Natural killer cell (primary cell): ENCODE measurements at regions of chr4 and their contacts with region 1.

Region 1: GRCh38 chr4:102344954-102345794 is at the start of gene SLC39A8:
- DNase-seq: peak; percentile 82 to 94
- ATAC-seq: peak; percentile 80 to 92 (median 83)
- H3K4me3 ChIP-seq: peak within 1 kb of the TSS; percentile 83
- H3K4me3 Mint-ChIP-seq: peak within 1 kb of the TSS; percentile 86
- H3K27ac ChIP-seq: peak within 1 kb of the TSS; percentile 92
- H3K27ac Mint-ChIP-seq: peak within 1 kb of the TSS; percentile 83 to 92
- H3K4me1 ChIP-seq: peaks cover 7% of the 10 kb centered on the region
- H3K4me1 Mint-ChIP-seq: peaks cover 37 to 41% of the 10 kb centered on the region in 2 donors
- H3K27me3 ChIP-seq: no peaks in the 10 kb centered on the region
- H3K27me3 Mint-ChIP-seq: peaks cover 0 to 6% of the 10 kb centered on the region in 2 donors
- CTCF ChIP-seq: peak; percentile 86
- total RNA-seq, gene SLC39A8: 18.0 to 20.0 (median 18.2) TPM

Region 2: GRCh38 chr4:102390438-102390837 is 45.3 kb after region 1 on chr4:
- intact Hi-C with region 1: loop called (anchors 1 kb)
- DNase-seq: peak in 1 of 2 donors; percentile 6
- ATAC-seq: peak; percentile 87 to 91 (median 89)
- H3K4me3 ChIP-seq: no peak overlapping the region
- H3K4me3 Mint-ChIP-seq: no peak overlapping the region
- H3K27ac ChIP-seq: no peak overlapping the region
- H3K27ac Mint-ChIP-seq: peak overlapping the region in 1 of 2 donors; percentile 4
- H3K4me1 ChIP-seq: no peaks in the 10 kb centered on the region
- H3K4me1 Mint-ChIP-seq: peaks cover 12 to 14% of the 10 kb centered on the region in 2 donors
- H3K27me3 ChIP-seq: peaks cover 2% of the 10 kb centered on the region
- H3K27me3 Mint-ChIP-seq: peaks cover 0 to 9% of the 10 kb centered on the region in 2 donors
- CTCF ChIP-seq: no peak

Region 3: GRCh38 chr4:102430461-102430910 is 85.3 kb after region 1 on chr4:
- intact Hi-C with region 1: loop called (anchors 1 kb)
- DNase-seq: peak in 1 of 2 donors; percentile 20
- ATAC-seq: no peak
- H3K4me3 ChIP-seq: peak overlapping the region; percentile 52
- H3K4me3 Mint-ChIP-seq: peak overlapping the region; percentile 88
- H3K27ac ChIP-seq: peak overlapping the region; percentile 38
- H3K27ac Mint-ChIP-seq: peak overlapping the region; percentile 80 to 81
- H3K4me1 ChIP-seq: no peaks in the 10 kb centered on the region
- H3K4me1 Mint-ChIP-seq: peaks cover 0 to 6% of the 10 kb centered on the region in 2 donors
- H3K27me3 ChIP-seq: no peaks in the 10 kb centered on the region
- H3K27me3 Mint-ChIP-seq: no peaks in the 10 kb centered on the region
- CTCF ChIP-seq: no peak

Region 4: DNA sequence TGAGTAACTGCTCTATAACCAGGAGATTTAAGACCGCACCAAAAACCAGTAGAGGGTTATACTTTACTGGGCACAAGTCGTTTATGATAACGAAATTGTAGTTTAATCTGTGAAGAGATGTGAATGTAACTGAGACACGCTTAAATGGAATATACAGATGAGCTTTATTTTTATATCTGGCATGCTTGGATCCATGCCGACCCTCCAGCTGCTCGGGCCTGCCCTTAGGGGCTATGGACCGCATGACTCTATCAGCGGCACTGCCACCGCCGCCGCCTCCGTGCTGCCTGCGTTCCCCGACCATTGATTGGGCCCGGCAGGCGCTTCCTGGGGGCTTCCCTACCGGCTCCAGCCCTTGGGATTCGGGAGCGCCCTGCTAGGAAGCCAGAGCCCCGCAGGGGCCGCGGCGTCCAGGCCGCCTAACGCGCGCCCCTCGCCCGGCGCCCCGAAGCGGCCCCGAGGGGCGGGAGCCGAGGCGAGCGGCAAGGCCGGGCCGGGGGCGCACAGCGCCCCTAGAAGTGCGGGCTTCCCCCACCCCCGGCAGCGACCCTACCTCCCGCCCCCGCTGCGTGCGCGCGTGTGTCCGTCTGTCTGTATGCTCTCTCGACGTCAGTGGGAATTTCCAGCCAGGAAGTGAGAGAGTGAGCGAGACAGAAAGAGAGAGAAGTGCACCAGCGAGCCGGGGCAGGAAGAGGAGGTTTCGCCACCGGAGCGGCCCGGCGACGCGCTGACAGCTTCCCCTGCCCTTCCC is 155.7 kb after region 1 on chr4 and contains the start of gene NFKB1:
- intact Hi-C with region 1: loop called (anchors 5 kb)
- DNase-seq: peak; percentile 84 to 96
- ATAC-seq: peak; percentile 71 to 86 (median 78)
- H3K4me3 ChIP-seq: peak within 1 kb of the TSS; percentile 95
- H3K4me3 Mint-ChIP-seq: peak within 1 kb of the TSS; percentile 96
- H3K27ac ChIP-seq: peak within 1 kb of the TSS; percentile 99
- H3K27ac Mint-ChIP-seq: peak within 1 kb of the TSS; percentile 97
- H3K4me1 ChIP-seq: peaks cover 11% of the 10 kb centered on the region
- H3K4me1 Mint-ChIP-seq: peaks cover 36 to 41% of the 10 kb centered on the region in 2 donors
- H3K27me3 ChIP-seq: no peaks in the 10 kb centered on the region
- H3K27me3 Mint-ChIP-seq: peaks cover 0 to 7% of the 10 kb centered on the region in 2 donors
- CTCF ChIP-seq: no peak
- total RNA-seq, gene NFKB1: 144 to 235 (median 163) TPM

Region 5: DNA sequence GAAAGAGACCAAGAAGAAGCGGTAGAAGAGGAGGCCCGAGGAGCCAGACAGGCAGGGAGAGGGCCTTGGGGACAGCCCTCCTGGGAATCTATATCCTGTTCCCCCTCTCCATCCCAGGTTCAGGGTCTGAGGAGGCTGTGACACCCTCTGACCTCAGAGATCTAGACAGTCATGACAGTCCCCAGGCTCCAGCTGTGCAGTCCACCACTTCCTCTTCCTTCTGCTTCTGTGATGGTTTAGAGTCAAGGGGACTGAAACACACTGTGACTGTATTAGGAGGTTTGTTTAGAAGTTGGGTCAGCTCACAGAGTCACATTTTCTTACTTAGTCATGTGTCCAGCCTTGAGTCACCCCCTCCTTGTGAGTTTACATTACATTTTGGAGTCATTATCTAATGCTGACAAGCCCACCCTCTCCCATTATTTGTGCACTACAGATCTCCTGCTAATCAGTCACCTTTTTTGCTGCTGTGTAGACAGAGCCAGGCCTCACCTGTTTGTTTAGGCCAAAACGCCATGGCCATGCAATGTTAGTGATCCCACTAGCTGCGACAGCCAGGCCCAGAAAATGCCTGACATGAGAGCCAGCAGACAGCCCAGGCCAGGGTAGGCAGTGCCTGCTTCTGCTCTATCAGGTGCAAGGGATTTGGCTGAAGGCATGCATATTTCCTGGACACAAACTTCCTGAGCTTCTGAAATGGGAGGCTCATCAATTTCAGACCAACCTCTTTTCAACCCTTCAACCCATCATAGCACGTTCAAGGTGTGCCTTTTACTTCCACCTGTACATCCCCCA is 389.6 kb after region 1 on chr4:
- intact Hi-C with region 1: no loop called
- DNase-seq: peak; percentile 23 to 31
- ATAC-seq: peak; percentile 86 to 91 (median 87)
- H3K4me3 ChIP-seq: no peak overlapping the region
- H3K4me3 Mint-ChIP-seq: peak overlapping the region; percentile 68
- H3K27ac ChIP-seq: peak overlapping the region; percentile 83
- H3K27ac Mint-ChIP-seq: peak overlapping the region; percentile 95
- H3K4me1 ChIP-seq: peaks cover 14% of the 10 kb centered on the region
- H3K4me1 Mint-ChIP-seq: peaks cover 57 to 67% of the 10 kb centered on the region in 2 donors
- H3K27me3 ChIP-seq: no peaks in the 10 kb centered on the region
- H3K27me3 Mint-ChIP-seq: no peaks in the 10 kb centered on the region
- CTCF ChIP-seq: no peak

Region 6: GRCh38 chr4:102868781-102869568 is 523.8 kb after region 1 on chr4 and contains the start of gene CISD2:
- intact Hi-C with region 1: loop called (anchors 5 kb)
- DNase-seq: peak; percentile 92 to 96
- ATAC-seq: peak; percentile 83 to 95 (median 87)
- H3K4me3 ChIP-seq: peak within 1 kb of the TSS; percentile 76
- H3K4me3 Mint-ChIP-seq: peak within 1 kb of the TSS; percentile 93
- H3K27ac ChIP-seq: peak within 1 kb of the TSS; percentile 96
- H3K27ac Mint-ChIP-seq: peak within 1 kb of the TSS; percentile 97 to 99
- H3K4me1 ChIP-seq: peaks cover 16% of the 10 kb centered on the region
- H3K4me1 Mint-ChIP-seq: peaks cover 19 to 24% of the 10 kb centered on the region in 2 donors
- H3K27me3 ChIP-seq: no peaks in the 10 kb centered on the region
- H3K27me3 Mint-ChIP-seq: no peaks in the 10 kb centered on the region
- CTCF ChIP-seq: no peak
- total RNA-seq, gene CISD2: 11.2 to 13.8 (median 13.5) TPM

Region 7: GRCh38 chr4:103008875-103009729 is 663.9 kb after region 1 on chr4:
- intact Hi-C with region 1: loop called (anchors 1 kb)
- DNase-seq: peak in 1 of 2 donors; percentile 85
- ATAC-seq: peak; percentile 89 to 97 (median 90)
- H3K4me3 ChIP-seq: no peak overlapping the region
- H3K4me3 Mint-ChIP-seq: no peak overlapping the region
- H3K27ac ChIP-seq: no peak overlapping the region
- H3K27ac Mint-ChIP-seq: no peak overlapping the region
- H3K4me1 ChIP-seq: no peaks in the 10 kb centered on the region
- H3K4me1 Mint-ChIP-seq: no peaks in the 10 kb centered on the region
- H3K27me3 ChIP-seq: no peaks in the 10 kb centered on the region
- H3K27me3 Mint-ChIP-seq: peaks cover 3 to 5% of the 10 kb centered on the region in 2 donors
- CTCF ChIP-seq: peak; percentile 85

Region 8: DNA sequence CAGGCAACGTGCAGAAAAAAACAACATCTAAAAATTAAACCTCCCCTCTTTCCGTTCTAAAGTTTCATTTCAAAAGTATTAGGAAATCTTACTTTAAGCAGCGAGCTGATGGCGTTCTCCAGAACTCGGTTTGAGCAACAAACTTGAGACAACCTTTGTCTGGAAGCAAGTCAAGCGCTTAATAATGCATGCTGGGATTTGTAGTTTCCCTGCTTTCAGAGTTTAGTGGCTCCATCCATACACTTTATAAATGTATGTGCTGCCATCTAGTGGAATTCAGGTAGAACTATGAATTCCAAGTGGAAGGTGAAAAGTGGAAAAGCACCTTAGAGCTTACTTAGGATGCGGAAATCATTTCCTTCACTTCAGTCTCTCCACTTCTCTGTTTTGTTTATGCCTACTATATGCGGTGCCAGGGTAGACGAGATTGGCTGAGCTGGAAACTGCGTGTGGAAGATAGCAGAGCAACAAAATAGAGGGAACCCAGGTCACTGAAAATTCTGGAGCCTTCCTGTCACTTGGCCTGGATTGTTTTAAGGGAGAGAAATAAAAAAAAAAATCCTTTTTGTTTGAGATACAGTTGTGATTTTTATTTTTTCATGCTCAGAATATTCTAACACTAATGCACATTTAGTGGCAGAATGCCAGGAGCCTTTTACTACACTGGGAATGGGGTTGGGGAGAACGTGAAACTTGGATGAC is 754.7 kb after region 1 on chr4 and contains the start of gene BDH2:
- intact Hi-C with region 1: loop called (anchors 1 kb)
- DNase-seq: peak in 1 of 2 donors; percentile 89
- ATAC-seq: peak; percentile 98 to 100 (median 100)
- H3K4me3 ChIP-seq: peak within 1 kb of the TSS; percentile 34
- H3K4me3 Mint-ChIP-seq: peak within 1 kb of the TSS; percentile 99
- H3K27ac ChIP-seq: peak within 1 kb of the TSS; percentile 13
- H3K27ac Mint-ChIP-seq: peak within 1 kb of the TSS; percentile 90
- H3K4me1 ChIP-seq: peaks cover 7% of the 10 kb centered on the region
- H3K4me1 Mint-ChIP-seq: peaks cover 19 to 26% of the 10 kb centered on the region in 2 donors
- H3K27me3 ChIP-seq: no peaks in the 10 kb centered on the region
- H3K27me3 Mint-ChIP-seq: no peaks in the 10 kb centered on the region
- CTCF ChIP-seq: peak; percentile 82
- total RNA-seq, gene BDH2: 12.1 to 16.6 (median 15.9) TPM